GM12878 (cell line): ENCODE measurements at regions of chr7 and their contacts with region 1.

Region 1: GRCh38 chr7:64307254-64308015 is 6.3 kb upstream of the ZNF736 start:
- DNase-seq: peak; percentile 89
- ATAC-seq: peak; percentile 98
- H3K4me3 ChIP-seq: peak overlapping the region; percentile 80
- H3K27ac ChIP-seq: peak overlapping the region; percentile 82
- H3K4me1 ChIP-seq: no peaks in the 10 kb centered on the region; the same call in 1 of the 2 replicates
- H3K27me3 ChIP-seq: no peaks in the 10 kb centered on the region
- CTCF ChIP-seq: no peak
- EP300 ChIP-seq: 0 out of 4 replicates have a peak, but pooled peaks of 1 of the 2 experiments have one; percentile 22
- POLR2A ChIP-seq: peak; percentile 77
- RAD21 ChIP-seq: no peak

Region 2: GRCh38 chr7:63925623-63926460 is 381.6 kb before region 1 on chr7:
- CTCF ChIA-PET with region 1: no interaction called
- POLR2A ChIA-PET with region 1: no interaction called
- RAD21 ChIA-PET with region 1: no interaction called
- SMC1A ChIA-PET with region 1: no interaction called
- in situ Hi-C with region 1: no loop called
- intact Hi-C with region 1: no loop called
- DNase-seq: no peak
- ATAC-seq: no peak
- H3K4me3 ChIP-seq: no peak overlapping the region
- H3K27ac ChIP-seq: no peak overlapping the region
- H3K4me1 ChIP-seq: no peaks in the 10 kb centered on the region
- H3K27me3 ChIP-seq: no peaks in the 10 kb centered on the region
- CTCF ChIP-seq: no peak
- EP300 ChIP-seq: no peak
- POLR2A ChIP-seq: no peak
- RAD21 ChIP-seq: no peak

Region 3: DNA sequence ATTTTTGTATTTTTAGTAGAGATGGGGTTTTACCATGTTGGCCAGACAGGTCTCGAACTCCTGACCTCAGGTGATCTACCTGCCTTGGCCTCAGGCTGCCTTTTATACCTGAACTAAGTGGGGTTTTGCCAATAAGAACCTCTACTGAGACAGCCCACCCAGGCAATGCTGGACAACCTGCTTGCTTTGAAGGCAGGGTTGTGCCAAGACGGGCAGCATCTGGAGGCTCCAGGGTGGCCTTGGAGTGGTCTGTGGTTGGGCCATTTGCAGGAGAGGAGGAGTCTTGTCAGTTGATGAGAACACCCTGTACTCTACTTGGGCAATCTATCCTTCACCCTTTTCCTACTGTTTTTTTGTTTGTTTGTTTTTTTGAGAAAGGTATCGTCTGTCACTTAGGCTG is 175.7 kb before region 1 on chr7:
- CTCF ChIA-PET with region 1: no interaction called
- POLR2A ChIA-PET with region 1: no interaction called
- RAD21 ChIA-PET with region 1: no interaction called
- SMC1A ChIA-PET with region 1: no interaction called
- in situ Hi-C with region 1: no loop called
- intact Hi-C with region 1: no loop called
- DNase-seq: no peak
- ATAC-seq: no peak
- H3K4me3 ChIP-seq: no peak overlapping the region
- H3K27ac ChIP-seq: no peak overlapping the region
- H3K4me1 ChIP-seq: no peaks in the 10 kb centered on the region
- H3K27me3 ChIP-seq: no peaks in the 10 kb centered on the region
- CTCF ChIP-seq: no peak
- EP300 ChIP-seq: no peak
- POLR2A ChIP-seq: no peak
- RAD21 ChIP-seq: no peak

Region 4: DNA sequence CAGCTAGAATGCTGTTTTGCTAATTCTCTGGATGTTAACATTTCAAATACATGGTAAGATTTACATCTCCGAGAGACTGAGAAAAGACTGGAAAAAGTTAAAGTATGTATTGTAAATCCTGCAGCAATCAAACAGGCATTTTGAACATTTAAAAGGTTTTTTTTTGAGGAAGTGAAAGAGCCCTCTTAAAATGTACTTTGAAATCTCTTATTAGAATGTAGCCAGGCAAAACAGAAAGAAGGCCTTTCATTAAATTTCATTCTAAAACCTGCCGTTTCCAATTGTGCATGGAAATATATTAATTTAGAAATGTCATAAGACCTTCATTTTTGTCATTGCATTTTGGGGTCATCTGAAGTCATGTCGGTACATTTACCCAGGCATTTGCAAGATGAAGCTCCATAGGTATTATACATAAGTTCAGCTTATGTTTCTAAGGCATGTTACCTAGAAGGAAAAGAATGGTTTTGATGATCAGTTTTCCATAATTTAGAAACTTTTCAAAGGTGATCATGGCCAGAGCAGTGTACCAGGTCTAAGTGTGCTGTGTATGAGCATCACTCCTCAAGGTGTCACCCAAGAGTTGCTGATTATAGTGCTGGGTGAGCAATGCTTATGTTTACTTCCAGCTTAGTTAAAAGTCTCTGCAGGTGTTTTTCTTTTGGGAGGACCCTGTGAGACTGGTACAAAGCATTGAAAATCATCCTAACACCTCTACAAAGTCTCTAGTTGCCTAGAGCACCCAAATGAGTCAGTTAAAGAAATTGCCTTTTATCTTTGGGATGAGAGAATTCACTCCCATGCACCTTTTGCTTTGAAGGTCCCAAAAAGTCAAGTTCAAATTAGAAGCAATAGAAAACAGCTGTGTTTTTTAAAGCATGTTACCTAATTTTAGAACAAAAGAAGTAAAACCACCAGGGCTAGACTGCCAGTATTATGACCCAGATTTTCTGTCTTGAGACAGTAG is 13.4 kb after region 1 on chr7:
- CTCF ChIA-PET with region 1: interaction called, 8 read pairs
- POLR2A ChIA-PET with region 1: interaction called, 11 read pairs
- RAD21 ChIA-PET with region 1: interaction called, 23 read pairs
- SMC1A ChIA-PET with region 1: interaction called, 19 read pairs
- in situ Hi-C with region 1: no loop called
- intact Hi-C with region 1: no loop called
- DNase-seq: no peak
- ATAC-seq: peak; percentile 75
- H3K4me3 ChIP-seq: no peak overlapping the region
- H3K27ac ChIP-seq: no peak overlapping the region
- H3K4me1 ChIP-seq: no peaks in the 10 kb centered on the region
- H3K27me3 ChIP-seq: no peaks in the 10 kb centered on the region
- CTCF ChIP-seq: no peak
- EP300 ChIP-seq: peak in 1 of 2 experiments; percentile 6; a peak in 1 of 4 replicates
- POLR2A ChIP-seq: no peak
- RAD21 ChIP-seq: 0 out of 2 replicates have a peak, but pooled peaks have one; percentile 32

Region 5: DNA sequence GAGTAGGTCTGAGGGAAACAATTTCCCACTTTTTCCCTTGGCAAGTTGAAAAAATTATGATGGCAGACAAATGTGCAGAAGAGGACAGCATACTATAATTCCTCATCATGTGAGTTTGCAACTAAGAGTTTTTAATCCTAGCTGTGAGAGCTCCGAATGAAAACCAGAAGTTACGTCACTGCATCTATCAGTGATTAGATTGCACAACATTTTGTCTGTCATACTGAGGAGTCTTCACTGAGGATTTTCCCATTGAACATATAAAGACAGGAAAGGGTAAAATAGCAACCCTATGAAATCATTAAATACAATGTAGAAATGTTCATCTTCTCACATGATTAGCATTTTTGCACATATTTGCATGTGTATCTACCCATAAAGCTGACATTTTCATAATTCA is 52.1 kb after region 1 on chr7:
- CTCF ChIA-PET with region 1: no interaction called
- POLR2A ChIA-PET with region 1: no interaction called
- RAD21 ChIA-PET with region 1: no interaction called
- SMC1A ChIA-PET with region 1: no interaction called
- in situ Hi-C with region 1: no loop called
- intact Hi-C with region 1: loop called (anchors 5 kb)
- DNase-seq: no peak
- ATAC-seq: no peak
- H3K4me3 ChIP-seq: no peak overlapping the region
- H3K27ac ChIP-seq: no peak overlapping the region
- H3K4me1 ChIP-seq: no peaks in the 10 kb centered on the region
- H3K27me3 ChIP-seq: no peaks in the 10 kb centered on the region
- CTCF ChIP-seq: no peak
- EP300 ChIP-seq: no peak
- POLR2A ChIP-seq: no peak
- RAD21 ChIP-seq: no peak

Region 6: GRCh38 chr7:64371106-64371505 is 63.7 kb after region 1 on chr7:
- CTCF ChIA-PET with region 1: no interaction called
- POLR2A ChIA-PET with region 1: no interaction called
- RAD21 ChIA-PET with region 1: no interaction called
- SMC1A ChIA-PET with region 1: no interaction called
- in situ Hi-C with region 1: no loop called
- intact Hi-C with region 1: no loop called
- DNase-seq: no peak
- ATAC-seq: no peak
- H3K4me3 ChIP-seq: no peak overlapping the region
- H3K27ac ChIP-seq: no peak overlapping the region
- H3K4me1 ChIP-seq: no peaks in the 10 kb centered on the region
- H3K27me3 ChIP-seq: no peaks in the 10 kb centered on the region
- CTCF ChIP-seq: no peak
- EP300 ChIP-seq: no peak
- POLR2A ChIP-seq: no peak
- RAD21 ChIP-seq: no peak

Region 7: DNA sequence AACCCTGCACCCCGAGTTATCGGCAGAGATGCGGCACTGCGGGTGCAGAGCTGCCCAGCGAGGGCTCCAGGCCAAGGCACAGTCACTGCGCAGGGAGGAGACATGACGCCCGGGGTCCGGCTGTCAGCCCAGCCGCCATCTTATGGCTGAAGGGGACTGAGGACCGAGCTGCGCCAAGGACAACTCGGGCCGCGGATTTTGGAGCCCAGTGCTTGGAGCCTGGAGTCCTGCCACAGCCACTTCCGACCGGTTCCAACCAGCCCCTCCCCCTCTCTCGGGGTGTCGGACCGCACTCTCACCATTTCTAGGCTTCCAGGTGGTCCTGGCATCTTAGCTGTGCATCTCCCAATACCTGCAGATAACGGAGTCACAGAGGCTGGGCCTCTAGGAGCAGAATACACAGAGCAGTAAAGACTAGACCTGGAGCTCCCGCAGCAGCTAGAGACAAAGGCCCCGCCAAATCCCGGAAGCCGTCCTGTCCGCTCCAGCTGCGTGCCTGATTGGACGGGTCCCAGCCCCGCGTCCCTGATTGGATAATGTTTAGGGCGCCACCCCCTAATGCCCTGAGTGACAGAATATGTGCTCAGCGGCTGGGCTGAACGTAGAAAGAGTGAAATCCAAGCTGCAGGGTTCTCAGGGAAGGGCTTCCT is 255.3 kb after region 1 on chr7 and contains the start of gene ZNF680:
- CTCF ChIA-PET with region 1: no interaction called
- POLR2A ChIA-PET with region 1: interaction called, 4 read pairs
- RAD21 ChIA-PET with region 1: interaction called, 6 read pairs
- SMC1A ChIA-PET with region 1: interaction called, 3 read pairs
- in situ Hi-C with region 1: no loop called
- intact Hi-C with region 1: loop called (anchors 10 kb)
- DNase-seq: peak; percentile 75
- ATAC-seq: peak; percentile 99
- H3K4me3 ChIP-seq: peak within 1 kb of the TSS; percentile 74
- H3K27ac ChIP-seq: peak within 1 kb of the TSS; percentile 75
- H3K4me1 ChIP-seq: no peaks in the 10 kb centered on the region
- H3K27me3 ChIP-seq: no peaks in the 10 kb centered on the region
- CTCF ChIP-seq: no peak
- EP300 ChIP-seq: no peak
- POLR2A ChIP-seq: peak; percentile 82
- RAD21 ChIP-seq: no peak
- polyA plus RNA-seq, gene ZNF680: 5.0 to 6.2 TPM

Region 8: DNA sequence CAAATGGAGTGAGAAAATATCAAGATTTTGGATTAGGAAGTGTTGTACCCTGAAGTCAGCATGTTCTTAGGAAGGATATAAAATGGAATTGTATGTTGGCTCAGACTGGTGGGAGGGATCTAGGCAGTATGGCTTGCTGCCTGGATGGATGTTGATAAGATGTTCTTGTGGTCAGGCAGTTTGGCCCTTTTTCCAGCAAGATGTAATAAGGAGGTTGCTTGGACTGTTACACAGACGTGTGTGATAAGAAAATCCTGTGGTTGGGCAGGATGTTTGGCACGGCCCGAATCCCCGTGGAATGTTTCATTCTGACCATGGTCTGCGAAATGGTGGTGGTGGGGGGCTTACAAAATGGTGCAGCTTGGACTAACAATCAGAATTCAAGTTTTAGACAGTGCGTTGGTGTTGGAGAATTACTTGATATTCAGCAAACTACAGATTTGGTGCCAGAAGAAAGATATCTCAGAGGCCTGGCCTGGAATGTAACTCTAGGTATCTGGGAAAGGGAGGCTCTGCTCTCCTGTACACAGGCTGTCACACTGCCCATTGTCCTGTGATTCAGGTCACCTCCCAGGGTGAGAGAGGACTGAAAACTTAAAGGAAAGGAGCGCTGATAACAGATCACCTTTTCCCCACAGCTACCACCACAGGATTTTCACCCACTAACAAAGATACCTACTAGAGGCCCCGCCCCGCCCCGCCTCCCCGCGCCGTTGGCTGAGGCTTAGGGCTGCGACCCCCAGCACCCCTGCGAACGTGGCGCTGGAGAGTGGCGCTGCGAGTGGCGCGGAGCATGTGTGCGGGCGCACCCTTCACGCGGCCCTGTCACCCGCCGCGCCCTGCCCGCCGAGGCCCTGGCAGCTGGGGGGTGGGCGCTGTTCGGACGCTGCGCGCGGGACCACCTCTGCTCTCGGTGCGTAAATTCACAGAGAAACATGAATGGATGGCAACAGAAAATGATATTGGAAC is 274.8 kb after region 1 on chr7:
- CTCF ChIA-PET with region 1: no interaction called
- POLR2A ChIA-PET with region 1: no interaction called
- RAD21 ChIA-PET with region 1: no interaction called
- SMC1A ChIA-PET with region 1: no interaction called
- in situ Hi-C with region 1: no loop called
- intact Hi-C with region 1: no loop called
- DNase-seq: no peak
- ATAC-seq: no peak
- H3K4me3 ChIP-seq: no peak overlapping the region
- H3K27ac ChIP-seq: no peak overlapping the region
- H3K4me1 ChIP-seq: no peaks in the 10 kb centered on the region
- H3K27me3 ChIP-seq: no peaks in the 10 kb centered on the region
- CTCF ChIP-seq: no peak
- EP300 ChIP-seq: no peak
- POLR2A ChIP-seq: no peak
- RAD21 ChIP-seq: no peak

Region 9: DNA sequence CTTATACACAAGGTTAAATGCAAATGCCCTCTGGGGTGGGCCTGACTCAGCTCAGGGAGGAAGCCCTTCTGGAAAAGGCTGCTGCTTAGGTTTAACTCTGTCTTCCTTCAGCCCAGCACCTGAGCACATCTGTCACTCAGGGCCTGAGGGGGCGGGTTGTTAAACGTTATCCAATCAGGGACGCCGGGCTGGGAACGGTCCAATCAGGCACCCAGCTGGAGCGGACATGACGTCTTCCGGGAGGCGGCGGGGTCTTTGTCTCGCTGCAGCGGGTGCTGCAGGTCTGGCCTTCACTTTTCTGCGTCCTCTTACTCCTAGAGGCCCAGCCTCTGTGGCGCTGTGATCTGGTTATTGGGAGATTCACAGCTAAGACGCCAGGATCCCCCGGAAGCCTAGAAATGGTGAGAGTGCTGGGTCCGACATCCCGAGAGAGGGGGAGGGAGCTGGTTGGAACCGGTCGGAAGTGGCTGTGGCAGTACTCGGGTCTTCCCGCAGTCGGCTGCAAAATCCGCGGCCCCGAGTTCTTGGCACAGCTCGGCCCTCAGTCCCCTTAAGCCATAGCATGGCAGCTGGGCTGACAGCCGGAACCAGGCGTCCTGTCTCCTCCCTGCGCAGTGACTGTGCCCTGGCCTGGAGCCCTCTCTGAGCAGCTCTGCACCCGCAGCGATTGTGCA is 486.9 kb after region 1 on chr7 and contains the start of gene ZNF138:
- CTCF ChIA-PET with region 1: no interaction called
- POLR2A ChIA-PET with region 1: no interaction called
- RAD21 ChIA-PET with region 1: interaction called, 3 read pairs
- SMC1A ChIA-PET with region 1: no interaction called
- in situ Hi-C with region 1: loop called (anchors 10 kb)
- intact Hi-C with region 1: no loop called
- DNase-seq: peak; percentile 84
- ATAC-seq: peak; percentile 100
- H3K4me3 ChIP-seq: peak within 1 kb of the TSS; percentile 88
- H3K27ac ChIP-seq: peak within 1 kb of the TSS; percentile 92
- H3K4me1 ChIP-seq: no peaks in the 10 kb centered on the region
- H3K27me3 ChIP-seq: no peaks in the 10 kb centered on the region
- CTCF ChIP-seq: no peak
- EP300 ChIP-seq: no peak
- POLR2A ChIP-seq: peak; percentile 90
- RAD21 ChIP-seq: no peak
- polyA plus RNA-seq, gene ZNF138: 8.6 to 11.0 TPM